GM12878 (cell line): ENCODE measurements at regions of chr15 and their contacts with region 1.

Region 1: DNA sequence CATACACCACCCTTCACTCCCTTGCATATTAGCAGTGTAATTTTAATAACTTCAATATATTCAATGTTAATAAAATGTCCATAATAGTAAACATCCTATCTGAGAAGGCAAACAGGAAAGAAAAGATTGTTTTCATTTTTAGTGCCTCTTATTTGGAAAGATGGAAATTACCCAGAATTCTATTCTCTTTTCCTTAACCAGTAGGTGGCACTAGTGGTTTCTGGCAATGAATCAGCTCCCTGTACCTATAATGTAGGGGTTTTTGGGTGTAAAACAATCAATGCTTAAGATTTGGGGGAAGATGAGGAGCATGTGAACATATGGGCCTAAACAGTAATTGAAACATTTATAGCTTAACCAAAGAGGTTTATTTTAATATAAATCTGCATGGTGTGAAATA is 5.7 kb upstream of the SEMA6D start:
- DNase-seq: no peak
- ATAC-seq: no peak
- H3K4me3 ChIP-seq: no peak overlapping the region
- H3K27ac ChIP-seq: no peak overlapping the region
- H3K4me1 ChIP-seq: no peaks in the 10 kb centered on the region
- H3K27me3 ChIP-seq: peaks cover 0 to 1% of the 10 kb centered on the region in 2 experiments; a peak in 2 of 4 replicates
- CTCF ChIP-seq: peak; percentile 27 to 48 (median 42); a peak in 4 of 6 replicates
- EP300 ChIP-seq: no peak
- POLR2A ChIP-seq: no peak
- RAD21 ChIP-seq: peak; percentile 83

Region 2: DNA sequence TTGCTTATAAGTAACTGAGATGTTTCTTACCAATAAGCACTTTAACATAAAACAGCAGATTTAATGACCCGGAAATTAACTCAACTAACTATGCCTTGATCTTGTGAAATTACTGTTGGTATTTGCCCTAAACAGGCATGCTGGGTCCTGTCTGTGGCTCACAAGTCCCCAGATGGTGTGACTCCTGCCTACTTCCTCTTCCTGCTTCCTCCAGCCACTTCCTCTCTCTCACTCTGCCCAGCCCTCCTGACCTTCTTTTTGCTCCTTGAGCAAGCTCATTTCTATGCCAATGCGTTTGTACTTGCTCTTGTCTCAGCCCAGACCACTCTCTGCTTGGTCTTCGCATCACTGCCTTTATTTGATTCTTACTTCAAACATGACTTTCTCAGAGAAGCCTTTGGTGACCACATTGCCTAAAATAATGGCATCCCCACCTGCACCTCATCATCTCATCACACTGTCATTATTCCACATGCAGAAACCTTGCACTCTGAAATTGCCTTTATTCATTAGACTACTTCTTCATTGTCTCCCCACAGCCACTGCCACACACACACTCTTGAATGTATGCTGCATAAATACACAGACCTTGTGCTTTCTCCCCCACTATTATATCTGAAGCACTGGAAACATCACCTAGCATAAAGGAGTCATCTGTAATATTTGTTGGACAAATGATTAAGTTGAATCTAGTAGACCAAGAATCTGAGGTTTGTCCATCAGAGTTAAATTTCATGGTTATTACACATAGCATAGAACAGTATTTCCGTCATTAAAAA is 250.7 kb before region 1 on chr15:
- CTCF ChIA-PET with region 1: no interaction called
- POLR2A ChIA-PET with region 1: no interaction called
- RAD21 ChIA-PET with region 1: no interaction called
- SMC1A ChIA-PET with region 1: no interaction called
- in situ Hi-C with region 1: no loop called
- intact Hi-C with region 1: no loop called
- DNase-seq: no peak
- ATAC-seq: no peak
- H3K4me3 ChIP-seq: no peak overlapping the region
- H3K27ac ChIP-seq: no peak overlapping the region
- H3K4me1 ChIP-seq: no peaks in the 10 kb centered on the region
- H3K27me3 ChIP-seq: no peaks in the 10 kb centered on the region
- CTCF ChIP-seq: no peak
- EP300 ChIP-seq: no peak
- POLR2A ChIP-seq: no peak
- RAD21 ChIP-seq: no peak

Region 3: GRCh38 chr15:47506329-47507100 is 205.1 kb before region 1 on chr15:
- CTCF ChIA-PET with region 1: no interaction called
- POLR2A ChIA-PET with region 1: no interaction called
- RAD21 ChIA-PET with region 1: no interaction called
- SMC1A ChIA-PET with region 1: no interaction called
- in situ Hi-C with region 1: no loop called
- intact Hi-C with region 1: no loop called
- DNase-seq: no peak
- ATAC-seq: no peak
- H3K4me3 ChIP-seq: no peak overlapping the region
- H3K27ac ChIP-seq: no peak overlapping the region
- H3K4me1 ChIP-seq: no peaks in the 10 kb centered on the region
- H3K27me3 ChIP-seq: no peaks in the 10 kb centered on the region
- CTCF ChIP-seq: no peak
- EP300 ChIP-seq: no peak
- POLR2A ChIP-seq: no peak
- RAD21 ChIP-seq: no peak

Region 4: GRCh38 chr15:47974724-47975123 is 263.1 kb after region 1 on chr15:
- CTCF ChIA-PET with region 1: interaction called, 5 read pairs
- POLR2A ChIA-PET with region 1: no interaction called
- RAD21 ChIA-PET with region 1: no interaction called
- SMC1A ChIA-PET with region 1: no interaction called
- in situ Hi-C with region 1: loop called (anchors 5 kb)
- intact Hi-C with region 1: no loop called
- DNase-seq: no peak
- ATAC-seq: no peak
- H3K4me3 ChIP-seq: no peak overlapping the region
- H3K27ac ChIP-seq: no peak overlapping the region
- H3K4me1 ChIP-seq: no peaks in the 10 kb centered on the region
- H3K27me3 ChIP-seq: peaks cover 0 to 2% of the 10 kb centered on the region in 2 experiments; a peak in 2 of 4 replicates
- CTCF ChIP-seq: no peak
- EP300 ChIP-seq: no peak
- POLR2A ChIP-seq: no peak
- RAD21 ChIP-seq: no peak

Region 5: DNA sequence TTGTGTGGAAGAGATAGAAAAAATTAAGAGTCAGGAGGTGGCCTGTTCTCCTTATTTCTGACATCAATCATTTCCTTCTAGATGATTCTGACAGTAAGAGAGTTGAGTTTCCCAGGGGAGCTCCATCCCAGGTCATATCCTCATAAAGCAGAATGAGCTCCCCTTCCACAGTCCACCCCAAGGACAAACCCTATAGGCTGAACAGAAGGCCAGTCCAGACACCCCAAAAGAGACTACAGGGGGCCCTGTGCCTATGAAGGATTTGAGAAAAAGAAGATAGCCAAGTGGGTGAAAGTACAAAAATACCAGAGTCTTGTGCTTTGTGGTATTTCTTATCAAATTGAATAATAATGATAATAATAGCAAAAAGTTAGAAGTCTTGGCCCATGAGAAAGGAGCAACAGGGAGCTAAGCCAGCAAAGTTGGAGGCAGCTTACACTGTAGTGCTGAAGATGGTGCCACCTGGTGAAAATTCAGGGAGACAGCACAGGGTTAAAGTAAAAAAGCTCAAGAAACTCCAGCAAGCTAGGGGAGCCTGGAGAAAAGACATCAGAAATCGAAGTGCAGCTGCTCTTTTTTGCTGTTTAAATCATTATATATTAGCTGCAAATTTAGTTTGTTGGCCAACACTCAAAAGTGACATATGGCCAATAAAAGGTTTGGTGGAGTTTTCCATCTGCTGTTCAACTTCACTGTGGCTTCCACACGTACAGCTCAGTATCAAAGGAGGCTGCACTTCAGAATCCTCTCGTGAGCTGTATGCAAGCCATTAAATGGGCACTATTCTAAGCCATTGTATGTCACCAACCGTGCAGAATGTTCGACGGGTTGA is 373.3 kb after region 1 on chr15:
- CTCF ChIA-PET with region 1: interaction called, 14 read pairs
- POLR2A ChIA-PET with region 1: no interaction called
- RAD21 ChIA-PET with region 1: interaction called, 7 read pairs
- SMC1A ChIA-PET with region 1: no interaction called
- in situ Hi-C with region 1: no loop called
- intact Hi-C with region 1: loop called (anchors 10 kb)
- DNase-seq: no peak
- ATAC-seq: peak; percentile 72
- H3K4me3 ChIP-seq: no peak overlapping the region
- H3K27ac ChIP-seq: no peak overlapping the region
- H3K4me1 ChIP-seq: no peaks in the 10 kb centered on the region
- H3K27me3 ChIP-seq: no peaks in the 10 kb centered on the region
- CTCF ChIP-seq: peak; percentile 44 to 52 (median 50)
- EP300 ChIP-seq: no peak
- POLR2A ChIP-seq: no peak
- RAD21 ChIP-seq: peak; percentile 59